Activated naive CD4-positive, alpha-beta T cell treated with anti-CD3 and anti-CD28 coated beads for 36 hours (primary cell): ENCODE measurements at regions of chr2 and their contacts with region 1.

Region 1: DNA sequence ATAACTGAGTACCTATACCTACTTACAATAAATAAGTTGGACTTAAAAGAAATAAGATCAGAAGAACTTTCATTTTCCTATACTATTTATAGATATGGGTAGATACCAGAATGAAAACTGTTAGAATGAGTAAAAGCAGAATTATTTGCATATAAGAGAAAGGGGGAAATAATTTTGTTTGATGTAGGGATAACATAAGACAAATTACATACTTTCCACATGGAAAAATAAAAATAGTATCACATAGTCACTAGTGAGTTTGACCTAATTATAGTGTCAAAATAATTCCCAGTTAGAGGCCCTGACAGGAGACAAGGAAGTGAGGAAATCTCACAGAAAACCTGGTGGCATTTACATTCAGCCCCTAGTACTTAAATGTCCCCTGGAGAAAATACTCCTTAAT is 28.6 kb downstream of the KCMF1 start:
- DNase-seq: no peak
- H3K4me3 Mint-ChIP-seq: peak overlapping the region; percentile 53
- H3K27ac Mint-ChIP-seq: peak overlapping the region; percentile 97
- H3K4me1 Mint-ChIP-seq: peaks cover 79% of the 10 kb centered on the region
- H3K27me3 Mint-ChIP-seq: no peaks in the 10 kb centered on the region

Region 2: DNA sequence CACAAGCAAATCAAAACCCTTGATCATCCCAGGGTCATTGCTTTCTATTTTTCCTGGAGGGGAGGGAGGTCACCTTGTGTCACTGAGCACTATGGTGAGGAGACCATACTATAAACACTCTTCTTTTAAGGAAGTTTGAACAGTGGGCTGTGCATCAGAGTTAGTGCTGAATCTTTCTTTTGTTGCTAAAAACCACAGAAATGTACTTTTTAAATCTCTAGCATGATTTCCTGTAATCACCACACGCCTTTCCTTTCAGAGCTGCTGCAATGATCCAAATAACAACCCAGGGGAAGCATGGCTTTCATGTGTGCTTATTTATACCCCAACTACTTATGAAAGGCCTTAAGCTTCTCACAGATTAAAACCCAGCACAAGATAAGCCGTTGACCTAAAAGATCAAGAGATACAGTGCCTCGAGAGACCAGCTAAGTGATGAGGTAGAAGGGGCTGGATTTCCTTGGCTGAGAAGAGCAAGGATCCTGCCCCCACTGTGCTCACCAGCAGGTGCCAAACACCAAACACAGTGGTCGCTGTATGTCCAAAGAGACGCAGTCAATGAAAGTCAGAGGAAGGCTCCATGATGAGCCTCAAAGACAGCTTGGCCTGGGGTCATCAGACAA is 153.4 kb before region 1 on chr2:
- CTCF ChIA-PET with region 1: no interaction called
- intact Hi-C with region 1: loop called (anchors 5 kb)
- DNase-seq: peak; percentile 66
- H3K4me3 Mint-ChIP-seq: peak overlapping the region; percentile 78
- H3K27ac Mint-ChIP-seq: peak overlapping the region; percentile 99
- H3K4me1 Mint-ChIP-seq: peaks cover 95% of the 10 kb centered on the region
- H3K27me3 Mint-ChIP-seq: no peaks in the 10 kb centered on the region

Region 3: DNA sequence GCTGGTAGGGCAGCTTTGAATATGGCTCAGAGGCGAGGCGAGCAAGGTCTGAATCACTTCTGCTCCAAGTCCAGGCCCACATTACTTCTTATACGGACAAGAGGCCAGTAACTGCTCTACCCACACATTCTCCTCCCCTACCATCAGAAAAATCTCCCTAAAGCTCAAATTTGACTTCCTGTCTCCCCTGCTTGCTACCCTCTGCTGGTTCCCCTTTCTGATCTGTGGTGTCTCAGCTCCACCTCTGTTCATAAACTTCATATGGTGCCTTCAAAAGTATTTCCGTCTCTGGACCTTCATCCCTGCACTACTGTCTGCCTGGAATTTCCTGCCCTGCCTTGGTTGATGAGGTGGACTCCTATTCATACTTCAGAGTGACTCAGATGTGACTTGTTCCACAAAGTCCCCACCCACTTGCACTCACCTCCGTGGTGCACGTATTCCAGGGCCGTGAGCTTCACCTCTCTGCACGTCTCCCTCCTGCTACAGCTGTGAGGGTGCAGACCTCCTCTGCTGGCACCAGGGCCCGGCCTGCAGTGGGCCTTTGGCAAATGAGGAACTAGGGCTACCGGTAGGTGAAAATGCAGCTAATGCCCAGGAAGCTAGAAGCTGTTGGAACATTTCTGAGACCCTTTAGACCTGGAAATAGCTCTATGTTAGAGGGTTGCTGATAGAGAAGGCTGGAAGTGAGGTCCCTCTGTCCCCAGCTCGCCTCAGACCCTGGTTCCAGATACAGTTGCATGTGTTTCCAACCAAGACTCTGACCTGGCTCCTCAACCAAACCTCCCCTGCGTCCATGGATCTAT is 53.1 kb before region 1 on chr2:
- CTCF ChIA-PET with region 1: interaction called, 7 read pairs
- intact Hi-C with region 1: loop called (anchors 1 kb)
- DNase-seq: peak; percentile 86
- H3K4me3 Mint-ChIP-seq: peak overlapping the region; percentile 62
- H3K27ac Mint-ChIP-seq: peak overlapping the region; percentile 92
- H3K4me1 Mint-ChIP-seq: peaks cover 49% of the 10 kb centered on the region
- H3K27me3 Mint-ChIP-seq: no peaks in the 10 kb centered on the region

Region 4: GRCh38 chr2:85011747-85012146 is 12.2 kb after region 1 on chr2:
- CTCF ChIA-PET with region 1: interaction called, 42 read pairs
- intact Hi-C with region 1: loop called (anchors 1 kb)
- DNase-seq: no peak
- H3K4me3 Mint-ChIP-seq: no peak overlapping the region
- H3K27ac Mint-ChIP-seq: peak overlapping the region; percentile 89
- H3K4me1 Mint-ChIP-seq: peaks cover 86% of the 10 kb centered on the region
- H3K27me3 Mint-ChIP-seq: no peaks in the 10 kb centered on the region

Region 5: GRCh38 chr2:85175369-85176299 is 176.1 kb after region 1 on chr2:
- CTCF ChIA-PET with region 1: no interaction called
- intact Hi-C with region 1: no loop called
- DNase-seq: no peak
- H3K4me3 Mint-ChIP-seq: no peak overlapping the region
- H3K27ac Mint-ChIP-seq: no peak overlapping the region
- H3K4me1 Mint-ChIP-seq: no peaks in the 10 kb centered on the region
- H3K27me3 Mint-ChIP-seq: no peaks in the 10 kb centered on the region